ENCODE measurements at regions of chr10 and their contacts with region 1.

Region 1: GRCh38 chr10:6151087-6151977 is 51.4 kb upstream of the PFKFB3 start:
- H3K4me3 Mint-ChIP-seq: peak overlapping the region; percentile 67
- H3K27ac Mint-ChIP-seq: peak overlapping the region; percentile 88
- H3K4me1 Mint-ChIP-seq: peaks cover 84% of the 10 kb centered on the region
- H3K27me3 Mint-ChIP-seq: no peaks in the 10 kb centered on the region

Region 2: DNA sequence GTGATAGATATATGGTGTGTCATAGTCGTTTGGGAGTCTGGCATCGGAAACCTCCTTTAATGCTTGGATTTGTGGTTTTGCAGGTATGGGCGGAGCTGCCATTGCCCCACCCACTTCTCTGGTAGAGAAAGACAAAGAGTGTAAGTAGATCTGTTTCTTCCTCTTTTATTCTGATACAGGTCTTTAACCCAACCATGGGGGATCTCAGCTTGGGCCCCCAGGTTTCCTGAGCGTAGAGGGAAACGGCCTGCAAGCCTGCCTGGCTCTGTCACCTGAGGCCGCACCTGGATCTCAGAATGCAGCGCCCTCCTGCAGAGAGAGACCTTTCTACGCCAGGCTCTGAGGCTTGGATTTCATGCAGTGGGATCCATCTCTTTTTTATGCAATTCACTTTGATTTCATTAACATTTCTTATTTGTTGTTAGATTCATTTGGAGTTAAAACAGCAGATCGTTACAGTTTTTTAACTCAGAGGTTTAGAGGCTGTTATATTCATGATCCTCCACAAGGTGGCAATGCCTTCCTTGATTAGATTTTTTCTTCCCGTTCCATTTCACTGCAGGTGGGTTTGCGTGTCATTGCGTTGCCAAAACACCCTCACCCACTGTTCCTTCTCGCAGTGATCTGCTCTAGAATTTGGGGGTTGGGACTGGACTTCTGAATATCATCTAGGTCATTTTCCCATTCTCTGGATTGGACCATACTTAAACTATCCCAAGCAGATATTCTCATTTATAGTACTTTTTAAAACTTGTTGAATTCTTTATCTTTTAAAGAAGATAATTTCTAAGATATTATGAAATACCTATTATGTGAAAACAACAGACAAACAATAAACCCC is 42.5 kb before region 1 on chr10:
- intact Hi-C with region 1: loop called (anchors 2 kb)
- H3K4me3 Mint-ChIP-seq: no peak overlapping the region
- H3K27ac Mint-ChIP-seq: no peak overlapping the region
- H3K4me1 Mint-ChIP-seq: peaks cover 10% of the 10 kb centered on the region
- H3K27me3 Mint-ChIP-seq: no peaks in the 10 kb centered on the region

Region 3: DNA sequence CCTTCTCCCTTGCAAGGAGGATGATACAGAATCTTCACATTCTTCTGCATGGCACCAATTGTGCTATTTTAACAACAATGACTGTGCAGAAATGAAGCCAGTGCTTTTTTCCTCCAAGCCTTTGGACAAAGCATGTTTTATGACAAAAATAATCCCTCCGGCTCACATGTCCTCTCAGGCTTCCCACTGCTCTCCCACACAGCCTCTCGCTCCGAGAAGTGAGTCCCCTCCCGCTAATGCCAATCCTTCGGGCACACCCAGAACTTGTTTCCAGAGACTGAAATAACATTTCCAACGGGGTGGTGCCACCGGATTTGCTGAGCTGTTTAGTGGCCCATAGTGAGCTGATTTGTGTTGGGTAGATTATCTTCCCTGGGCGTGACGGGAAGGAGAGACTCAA is 26.7 kb before region 1 on chr10:
- intact Hi-C with region 1: loop called (anchors 2 kb)
- H3K4me3 Mint-ChIP-seq: peak overlapping the region; percentile 55
- H3K27ac Mint-ChIP-seq: peak overlapping the region; percentile 89
- H3K4me1 Mint-ChIP-seq: peaks cover 69% of the 10 kb centered on the region
- H3K27me3 Mint-ChIP-seq: no peaks in the 10 kb centered on the region

Region 4: GRCh38 chr10:6202684-6203330 is 51.5 kb after region 1 on chr10 and contains the start of gene PFKFB3:
- intact Hi-C with region 1: loop called (anchors 5 kb)
- H3K4me3 Mint-ChIP-seq: peak within 1 kb of the TSS; percentile 89
- H3K27ac Mint-ChIP-seq: peak within 1 kb of the TSS; percentile 68
- H3K4me1 Mint-ChIP-seq: peaks cover 59% of the 10 kb centered on the region
- H3K27me3 Mint-ChIP-seq: peaks cover 13% of the 10 kb centered on the region

Region 5: DNA sequence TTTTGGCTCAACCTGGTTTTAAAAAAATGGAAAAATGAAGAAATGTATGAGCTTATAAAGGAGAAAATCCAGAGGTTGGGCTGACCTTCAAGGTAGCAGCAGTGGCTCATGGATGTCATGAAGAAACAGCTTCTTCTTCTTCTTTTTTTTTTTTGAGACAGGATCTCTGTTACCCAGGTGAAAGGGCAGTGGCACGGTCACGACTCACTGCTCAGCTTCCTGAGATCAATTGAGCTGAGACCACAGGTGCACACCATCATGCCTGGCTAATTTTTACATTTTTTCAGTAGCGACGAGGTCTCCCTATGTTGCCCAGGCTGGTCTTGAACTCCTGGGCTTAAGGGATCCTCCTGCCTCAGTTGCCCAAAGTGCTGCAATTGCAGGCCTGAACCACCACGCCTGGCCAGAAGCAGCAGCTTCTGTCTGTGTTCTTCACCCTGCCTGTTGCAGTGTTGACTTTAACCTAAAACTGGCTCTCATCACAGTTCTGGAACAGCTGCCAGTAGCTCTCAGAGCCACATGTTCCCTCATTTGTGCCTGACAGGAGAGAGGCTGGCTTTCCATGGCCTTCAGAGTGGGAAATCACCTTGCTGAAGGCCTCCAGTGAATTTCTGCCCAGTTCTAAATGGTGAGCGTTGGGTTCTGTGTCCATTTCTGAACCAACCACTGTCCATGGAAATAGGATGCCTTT is 169.1 kb after region 1 on chr10:
- intact Hi-C with region 1: no loop called
- H3K4me3 Mint-ChIP-seq: no peak overlapping the region
- H3K27ac Mint-ChIP-seq: no peak overlapping the region
- H3K4me1 Mint-ChIP-seq: no peaks in the 10 kb centered on the region
- H3K27me3 Mint-ChIP-seq: peaks cover 7% of the 10 kb centered on the region

Measured in dendritic cell treated with granulocyte-macrophage colony-stimulating factor and Interleukin-4, amounts not matched to agents 40 ng/mL and 50 ng/mL, for 4 days (primary cell).